ENCODE measurements at regions of chr17 and their contacts with region 1.

Region 1: DNA sequence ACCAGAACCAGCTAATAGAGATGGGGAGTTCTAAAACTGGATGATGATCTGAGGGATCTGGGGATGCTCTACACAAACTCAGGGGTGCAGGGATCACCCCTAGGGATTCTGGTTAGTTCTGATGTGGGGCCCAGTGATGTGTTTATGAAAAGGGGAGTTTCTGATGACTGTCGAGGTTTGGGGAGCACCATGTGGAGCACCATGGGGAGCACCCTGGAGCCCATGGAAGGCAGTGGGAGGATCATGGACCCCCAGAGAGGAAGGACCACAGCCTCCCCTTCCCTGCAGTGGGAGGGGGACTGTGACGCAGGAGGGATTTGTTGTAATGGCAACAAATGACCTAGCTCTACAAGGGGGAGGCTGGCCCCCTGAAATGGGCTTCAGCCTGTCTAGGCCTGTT is 18.4 kb downstream of the PIMREG start:
- DNase-seq: no peak
- ATAC-seq: no peak
- H3K4me3 ChIP-seq: no peak overlapping the region
- H3K27ac ChIP-seq: no peak overlapping the region
- H3K4me1 ChIP-seq: no peaks in the 10 kb centered on the region
- H3K27me3 ChIP-seq: no peaks in the 10 kb centered on the region
- CTCF ChIP-seq: no peak

Region 2: GRCh38 chr17:6443692-6444569 is 18.8 kb before region 1 on chr17 and contains the start of gene PIMREG:
- CTCF ChIA-PET with region 1: no interaction called
- POLR2A ChIA-PET with region 1: no interaction called
- in situ Hi-C with region 1: no loop called
- intact Hi-C with region 1: no loop called
- DNase-seq: peak; percentile 71
- ATAC-seq: peak; percentile 97
- H3K4me3 ChIP-seq: peak within 1 kb of the TSS; percentile 60 to 78
- H3K27ac ChIP-seq: peak within 1 kb of the TSS; percentile 98
- H3K4me1 ChIP-seq: peaks cover 7% of the 10 kb centered on the region
- H3K27me3 ChIP-seq: no peaks in the 10 kb centered on the region
- CTCF ChIP-seq: no peak
- total RNA-seq, gene PIMREG: 41.2 TPM

Region 3: GRCh38 chr17:6473128-6473767 is 10.6 kb after region 1 on chr17:
- CTCF ChIA-PET with region 1: interaction called, 12 read pairs
- POLR2A ChIA-PET with region 1: no interaction called
- in situ Hi-C with region 1: no loop called
- intact Hi-C with region 1: no loop called
- DNase-seq: peak; percentile 71
- ATAC-seq: peak; percentile 82
- H3K4me3 ChIP-seq: no peak overlapping the region
- H3K27ac ChIP-seq: no peak overlapping the region
- H3K4me1 ChIP-seq: peaks cover 3% of the 10 kb centered on the region; the same call in 1 of the 2 replicates
- H3K27me3 ChIP-seq: no peaks in the 10 kb centered on the region; the same call in 1 of the 2 replicates
- CTCF ChIP-seq: peak; percentile 95